IMR-90 (cell line): ENCODE measurements at regions of chr19 and their contacts with region 1.

Region 1: DNA sequence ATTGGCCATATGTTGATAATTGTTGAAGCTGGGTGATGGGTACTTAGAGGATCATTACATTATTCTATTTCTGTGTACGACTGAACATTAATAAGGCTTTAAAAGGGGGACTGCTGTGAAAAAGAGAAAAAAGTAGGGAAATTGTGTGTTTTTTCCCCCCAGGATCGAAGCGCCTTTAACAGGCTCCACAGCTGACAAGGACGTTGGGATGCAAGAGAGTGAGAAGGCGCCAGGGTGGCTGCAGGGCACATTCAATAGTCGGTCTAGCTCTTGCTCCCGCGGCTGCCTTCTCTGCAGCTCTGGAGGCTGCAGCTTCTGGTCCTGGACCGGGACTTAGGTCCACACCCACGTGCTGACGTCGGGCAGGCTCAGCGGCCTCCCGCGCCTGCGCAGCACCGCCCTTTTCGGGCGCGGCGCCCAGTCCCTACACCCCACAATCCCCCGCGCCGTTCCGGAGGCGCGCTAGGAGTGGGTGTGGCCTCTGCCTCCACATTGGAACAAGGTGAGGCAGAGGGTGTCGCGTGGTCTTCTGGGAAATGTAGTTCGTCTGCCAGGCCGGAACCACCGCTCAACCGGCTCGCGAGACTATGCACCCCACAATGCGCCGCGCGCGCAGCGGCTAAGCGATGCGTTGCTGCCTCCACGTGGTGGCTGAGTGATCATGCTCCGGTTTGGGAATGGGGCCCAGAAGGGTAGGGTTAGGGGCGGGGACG is 4.9 kb upstream of the LRFN3 start:
- DNase-seq: peak; percentile 99
- ATAC-seq: peak; percentile 98
- H3K4me3 ChIP-seq: peak overlapping the region; percentile 29
- H3K27ac ChIP-seq: peak overlapping the region; percentile 44
- H3K4me1 ChIP-seq: peaks cover 4% of the 10 kb centered on the region; the same call in 1 of the 2 replicates
- H3K27me3 ChIP-seq: no peaks in the 10 kb centered on the region
- CTCF ChIP-seq: peak; percentile 99
- POLR2A ChIP-seq: peak; percentile 80
- RAD21 ChIP-seq: peak; percentile 100

Region 2: GRCh38 chr19:35716801-35717666 is 214.3 kb before region 1 on chr19:
- CTCF ChIA-PET with region 1: no interaction called
- POLR2A ChIA-PET with region 1: no interaction called
- dilution Hi-C with region 1: no loop called
- in situ Hi-C with region 1: no loop called
- intact Hi-C with region 1: loop called (anchors 1 kb)
- DNase-seq: peak; percentile 94
- ATAC-seq: peak; percentile 87
- H3K4me3 ChIP-seq: peak overlapping the region; percentile 72
- H3K27ac ChIP-seq: peak overlapping the region; percentile 62
- H3K4me1 ChIP-seq: peaks cover 14% of the 10 kb centered on the region
- H3K27me3 ChIP-seq: no peaks in the 10 kb centered on the region
- CTCF ChIP-seq: peak; percentile 81
- POLR2A ChIP-seq: no peak
- RAD21 ChIP-seq: peak; percentile 71

Region 3: GRCh38 chr19:35757749-35758608 is 173.3 kb before region 1 on chr19 and contains the start of gene PROSER3:
- CTCF ChIA-PET with region 1: interaction called, 3 read pairs
- POLR2A ChIA-PET with region 1: no interaction called
- dilution Hi-C with region 1: no loop called
- in situ Hi-C with region 1: no loop called
- intact Hi-C with region 1: loop called (anchors 5 kb)
- DNase-seq: peak; percentile 100
- ATAC-seq: peak; percentile 86
- H3K4me3 ChIP-seq: peak within 1 kb of the TSS; percentile 58
- H3K27ac ChIP-seq: peak within 1 kb of the TSS; percentile 97
- H3K4me1 ChIP-seq: peaks cover 13% of the 10 kb centered on the region
- H3K27me3 ChIP-seq: no peaks in the 10 kb centered on the region
- CTCF ChIP-seq: no peak
- POLR2A ChIP-seq: peak; percentile 71
- RAD21 ChIP-seq: no peak
- total RNA-seq, gene PROSER3: 3.3 and 5.4 TPM in 2 replicates

Region 4: DNA sequence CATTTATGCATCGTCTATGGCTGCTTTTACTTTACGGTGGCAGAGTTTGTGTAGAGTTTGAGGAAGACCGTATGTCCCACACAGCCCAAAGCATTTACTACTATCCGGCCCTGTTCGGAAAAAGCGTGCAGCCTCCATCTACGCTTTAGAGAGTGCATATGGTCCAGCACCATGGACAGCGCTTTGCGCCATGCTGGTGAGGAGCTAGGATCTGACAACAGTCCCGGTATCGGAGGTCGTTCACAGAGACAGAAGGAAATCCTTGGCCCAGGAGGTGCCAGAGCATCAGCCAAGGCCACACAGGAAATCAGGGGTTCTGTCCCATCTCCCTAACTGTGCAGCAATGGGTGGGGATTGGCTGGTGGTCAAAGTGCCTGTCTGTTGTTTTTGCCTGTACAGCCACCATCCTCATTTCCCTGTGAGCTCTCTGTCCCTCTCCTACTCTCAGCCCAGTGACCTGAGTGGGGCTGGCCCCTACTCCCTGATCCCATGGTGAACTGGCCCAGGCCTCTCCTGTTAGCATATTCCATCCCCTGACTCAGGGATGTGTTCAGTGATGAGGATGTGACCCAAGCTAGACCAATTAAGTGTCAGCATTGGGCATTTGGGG is 102.5 kb before region 1 on chr19:
- CTCF ChIA-PET with region 1: no interaction called
- POLR2A ChIA-PET with region 1: no interaction called
- dilution Hi-C with region 1: no loop called
- in situ Hi-C with region 1: no loop called
- intact Hi-C with region 1: no loop called
- DNase-seq: peak; percentile 67
- ATAC-seq: peak; percentile 100
- H3K4me3 ChIP-seq: no peak overlapping the region
- H3K27ac ChIP-seq: no peak overlapping the region
- H3K4me1 ChIP-seq: no peaks in the 10 kb centered on the region
- H3K27me3 ChIP-seq: peaks cover 9% of the 10 kb centered on the region
- CTCF ChIP-seq: no peak
- POLR2A ChIP-seq: no peak
- RAD21 ChIP-seq: no peak

Region 5: GRCh38 chr19:35879770-35880317 is 51.5 kb before region 1 on chr19:
- CTCF ChIA-PET with region 1: interaction called, 4 read pairs
- POLR2A ChIA-PET with region 1: no interaction called
- dilution Hi-C with region 1: no loop called
- in situ Hi-C with region 1: loop called (anchors 5 kb)
- intact Hi-C with region 1: loop called (anchors 1 kb)
- DNase-seq: peak; percentile 89
- ATAC-seq: peak; percentile 100
- H3K4me3 ChIP-seq: no peak overlapping the region
- H3K27ac ChIP-seq: no peak overlapping the region
- H3K4me1 ChIP-seq: no peaks in the 10 kb centered on the region
- H3K27me3 ChIP-seq: no peaks in the 10 kb centered on the region
- CTCF ChIP-seq: no peak
- POLR2A ChIP-seq: no peak
- RAD21 ChIP-seq: no peak

Region 6: GRCh38 chr19:35889370-35890112 is 41.8 kb before region 1 on chr19:
- CTCF ChIA-PET with region 1: interaction called, 4 read pairs
- POLR2A ChIA-PET with region 1: no interaction called
- dilution Hi-C with region 1: no loop called
- in situ Hi-C with region 1: loop called (anchors 5 kb)
- intact Hi-C with region 1: no loop called
- DNase-seq: no peak
- ATAC-seq: no peak
- H3K4me3 ChIP-seq: no peak overlapping the region
- H3K27ac ChIP-seq: no peak overlapping the region
- H3K4me1 ChIP-seq: no peaks in the 10 kb centered on the region
- H3K27me3 ChIP-seq: no peaks in the 10 kb centered on the region
- CTCF ChIP-seq: no peak
- POLR2A ChIP-seq: no peak
- RAD21 ChIP-seq: no peak

Region 7: GRCh38 chr19:35899547-35900214 is 31.6 kb before region 1 on chr19:
- CTCF ChIA-PET with region 1: interaction called, 4 read pairs
- POLR2A ChIA-PET with region 1: no interaction called
- dilution Hi-C with region 1: no loop called
- in situ Hi-C with region 1: no loop called
- intact Hi-C with region 1: loop called (anchors 1 kb)
- DNase-seq: peak; percentile 81
- ATAC-seq: peak; percentile 71
- H3K4me3 ChIP-seq: peak overlapping the region; percentile 79
- H3K27ac ChIP-seq: peak overlapping the region; percentile 82
- H3K4me1 ChIP-seq: peaks cover 28% of the 10 kb centered on the region
- H3K27me3 ChIP-seq: no peaks in the 10 kb centered on the region
- CTCF ChIP-seq: no peak
- POLR2A ChIP-seq: no peak
- RAD21 ChIP-seq: 0 out of 2 replicates have a peak, but pooled peaks have one; percentile 0

Region 8: GRCh38 chr19:36054119-36054732 is 122.9 kb after region 1 on chr19 and contains the start of gene THAP8:
- CTCF ChIA-PET with region 1: no interaction called
- POLR2A ChIA-PET with region 1: no interaction called
- dilution Hi-C with region 1: no loop called
- in situ Hi-C with region 1: no loop called
- intact Hi-C with region 1: loop called (anchors 5 kb)
- DNase-seq: peak; percentile 99
- ATAC-seq: peak; percentile 89
- H3K4me3 ChIP-seq: peak within 1 kb of the TSS; percentile 76
- H3K27ac ChIP-seq: peak within 1 kb of the TSS; percentile 81
- H3K4me1 ChIP-seq: no peaks in the 10 kb centered on the region
- H3K27me3 ChIP-seq: no peaks in the 10 kb centered on the region
- CTCF ChIP-seq: peak; percentile 55
- POLR2A ChIP-seq: peak; percentile 72
- RAD21 ChIP-seq: no peak
- total RNA-seq, gene THAP8: 1.8 and 2.2 TPM in 2 replicates